Calu3 (cell line): ENCODE measurements at regions of chr14 and their contacts with region 1.

Region 1: GRCh38 chr14:50321009-50321660 is 9.0 kb downstream of the DMAC2L start:
- DNase-seq: peak; percentile 65
- H3K4me3 Mint-ChIP-seq: no peak overlapping the region
- H3K27ac Mint-ChIP-seq: no peak overlapping the region
- H3K4me1 Mint-ChIP-seq: peaks cover 14% of the 10 kb centered on the region
- H3K27me3 Mint-ChIP-seq: no peaks in the 10 kb centered on the region
- CTCF ChIP-seq: peak; percentile 49

Region 2: GRCh38 chr14:49633640-49634546 is 687.2 kb before region 1 on chr14:
- CTCF ChIA-PET with region 1: no interaction called
- intact Hi-C with region 1: no loop called
- DNase-seq: peak; percentile 95
- H3K4me3 Mint-ChIP-seq: peak overlapping the region; percentile 97
- H3K27ac Mint-ChIP-seq: peak overlapping the region; percentile 85
- H3K4me1 Mint-ChIP-seq: peaks cover 18% of the 10 kb centered on the region
- H3K27me3 Mint-ChIP-seq: no peaks in the 10 kb centered on the region
- CTCF ChIP-seq: peak; percentile 67

Region 3: GRCh38 chr14:50396631-50397390 is 75.7 kb after region 1 on chr14 and contains the start of gene CDKL1:
- CTCF ChIA-PET with region 1: interaction called, 7 read pairs
- intact Hi-C with region 1: loop called (anchors 1 kb)
- DNase-seq: peak; percentile 63
- H3K4me3 Mint-ChIP-seq: peak within 1 kb of the TSS; percentile 77
- H3K27ac Mint-ChIP-seq: peak within 1 kb of the TSS; percentile 73
- H3K4me1 Mint-ChIP-seq: no peaks in the 10 kb centered on the region
- H3K27me3 Mint-ChIP-seq: no peaks in the 10 kb centered on the region
- CTCF ChIP-seq: no peak
- total RNA-seq, gene CDKL1: 3.0 and 3.7 TPM in 2 replicates

Region 4: GRCh38 chr14:50447461-50447860 is 126.3 kb after region 1 on chr14:
- CTCF ChIA-PET with region 1: no interaction called
- intact Hi-C with region 1: loop called (anchors 5 kb)
- DNase-seq: no peak
- H3K4me3 Mint-ChIP-seq: no peak overlapping the region
- H3K27ac Mint-ChIP-seq: no peak overlapping the region
- H3K4me1 Mint-ChIP-seq: no peaks in the 10 kb centered on the region
- H3K27me3 Mint-ChIP-seq: no peaks in the 10 kb centered on the region
- CTCF ChIP-seq: no peak